CD4-positive, alpha-beta T cell (primary cell): ENCODE measurements at regions of chr2 and their contacts with region 1.

Region 1: DNA sequence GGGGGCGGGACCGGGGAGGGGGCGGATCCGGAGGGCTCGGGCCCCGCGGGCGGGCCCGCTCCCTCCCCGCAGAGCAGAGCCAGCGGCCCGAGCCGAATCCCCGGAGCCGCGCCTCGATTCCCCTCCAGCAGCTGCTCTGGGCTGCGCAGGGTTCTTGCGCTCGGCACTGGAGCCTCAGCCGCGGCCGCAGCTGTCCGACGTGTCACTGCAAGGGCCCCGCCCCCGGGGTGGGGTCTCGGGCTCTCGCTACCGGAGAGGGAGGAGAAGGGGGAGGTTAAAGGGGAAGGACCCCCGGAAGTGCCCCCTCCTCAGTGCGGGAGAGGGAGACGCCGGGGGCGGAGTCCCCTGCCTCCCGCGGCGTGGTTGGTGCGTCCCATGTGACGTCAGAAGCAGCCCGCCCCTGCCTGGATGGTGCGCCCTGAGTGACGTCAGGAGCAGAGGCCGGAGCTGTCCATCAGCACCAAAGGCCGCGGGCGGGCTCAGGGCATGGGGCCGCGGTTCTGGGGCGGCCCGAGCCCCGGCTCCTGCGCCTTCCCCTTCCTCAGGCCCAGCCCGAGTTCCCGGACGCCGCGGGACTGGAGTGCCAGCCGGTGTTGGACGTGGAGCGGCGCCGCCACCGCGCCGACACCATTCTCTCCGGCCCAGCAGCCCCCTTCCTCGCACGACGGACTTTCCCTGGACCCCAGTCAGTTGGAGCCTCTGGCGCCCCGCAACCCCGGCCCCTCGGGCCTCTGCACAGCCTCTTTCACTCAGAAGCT is at the starts of genes CHPF and TMEM198:
- DNase-seq: peak; percentile 83 to 97 (median 90)
- ATAC-seq: peak; percentile 69
- H3K4me3 ChIP-seq: peak within 1 kb of the TSS; percentile 72
- H3K4me3 Mint-ChIP-seq: peak within 1 kb of the TSS; percentile 86
- H3K27ac ChIP-seq: peak within 1 kb of the TSS; percentile 54 to 60
- H3K27ac Mint-ChIP-seq: peak within 1 kb of the TSS; percentile 75
- H3K4me1 ChIP-seq: peaks cover 32% of the 10 kb centered on the region
- H3K4me1 Mint-ChIP-seq: peaks cover 22% of the 10 kb centered on the region
- H3K27me3 ChIP-seq: no peaks in the 10 kb centered on the region
- H3K27me3 Mint-ChIP-seq: peaks cover 7% of the 10 kb centered on the region
- CTCF ChIP-seq: no peak
- total RNA-seq, gene CHPF: 6.5 to 7.1 TPM
- total RNA-seq, gene TMEM198: 0.47 to 0.91 TPM

Region 2: GRCh38 chr2:219155054-219155644 is 388.6 kb before region 1 on chr2:
- CTCF ChIA-PET with region 1: no interaction called
- POLR2A ChIA-PET with region 1: no interaction called
- intact Hi-C with region 1: loop called in 1 of 2 experiments (anchors 10 kb)
- DNase-seq: peak in 5 of 14 experiments; percentile 18 to 84 (median 75)
- ATAC-seq: peak; percentile 21
- H3K4me3 ChIP-seq: no peak overlapping the region
- H3K4me3 Mint-ChIP-seq: no peak overlapping the region
- H3K27ac ChIP-seq: no peak overlapping the region
- H3K27ac Mint-ChIP-seq: no peak overlapping the region
- H3K4me1 ChIP-seq: peaks cover 7% of the 10 kb centered on the region
- H3K4me1 Mint-ChIP-seq: peaks cover 13% of the 10 kb centered on the region
- H3K27me3 ChIP-seq: no peaks in the 10 kb centered on the region
- H3K27me3 Mint-ChIP-seq: no peaks in the 10 kb centered on the region
- CTCF ChIP-seq: peak; percentile 78

Region 3: DNA sequence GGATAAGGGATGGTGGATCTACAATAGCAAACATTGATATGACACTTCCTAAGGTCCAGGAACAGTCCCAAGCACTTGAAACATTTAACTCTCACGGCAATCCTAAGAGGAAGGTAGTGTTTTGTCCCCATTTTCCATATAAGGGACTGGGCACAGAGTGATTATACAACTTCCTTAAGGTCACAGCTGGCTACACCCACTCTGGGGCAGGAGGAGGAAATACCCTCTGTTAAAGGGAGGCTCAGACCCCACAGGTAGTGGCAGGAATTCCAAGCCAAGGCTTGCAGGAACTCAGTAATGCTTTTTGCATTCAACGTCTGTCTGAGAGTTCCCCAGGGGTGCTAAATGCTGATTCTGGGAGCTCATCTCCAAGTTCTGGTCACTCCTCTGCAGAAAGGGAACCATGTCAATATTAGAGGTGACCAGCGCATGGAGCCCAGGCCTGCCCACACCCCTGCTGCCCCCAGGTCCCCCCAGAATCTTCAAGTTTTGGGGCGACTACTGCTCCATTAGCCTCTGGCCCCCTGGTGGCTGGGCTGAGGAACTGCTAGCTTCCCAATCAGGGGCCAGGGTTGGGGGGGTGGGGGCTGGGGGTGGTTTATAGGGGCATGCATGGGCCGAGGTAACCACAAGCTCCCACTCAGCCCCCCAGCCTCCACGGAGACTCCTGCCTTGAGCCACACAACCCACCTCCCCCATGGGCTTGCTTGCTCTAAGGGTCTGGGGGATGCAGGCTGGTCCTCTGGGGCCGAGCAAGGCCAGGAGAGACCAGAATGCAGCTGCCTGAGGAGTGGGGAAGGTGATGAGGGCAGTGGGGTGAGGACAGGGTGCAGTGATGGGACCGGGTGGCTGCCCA is 16.5 kb after region 1 on chr2:
- CTCF ChIA-PET with region 1: interaction called, 21 read pairs
- POLR2A ChIA-PET with region 1: no interaction called
- intact Hi-C with region 1: loop called (anchors 1 to 2 kb)
- DNase-seq: peak in 5 of 14 experiments; percentile 23 to 59 (median 35)
- ATAC-seq: peak; percentile 80
- H3K4me3 ChIP-seq: no peak overlapping the region
- H3K4me3 Mint-ChIP-seq: no peak overlapping the region
- H3K27ac ChIP-seq: no peak overlapping the region
- H3K27ac Mint-ChIP-seq: no peak overlapping the region
- H3K4me1 ChIP-seq: no peaks in the 10 kb centered on the region
- H3K4me1 Mint-ChIP-seq: no peaks in the 10 kb centered on the region
- H3K27me3 ChIP-seq: peaks cover 12 to 14% of the 10 kb centered on the region in 2 experiments
- H3K27me3 Mint-ChIP-seq: peaks cover 52% of the 10 kb centered on the region
- CTCF ChIP-seq: peak; percentile 77

Region 4: DNA sequence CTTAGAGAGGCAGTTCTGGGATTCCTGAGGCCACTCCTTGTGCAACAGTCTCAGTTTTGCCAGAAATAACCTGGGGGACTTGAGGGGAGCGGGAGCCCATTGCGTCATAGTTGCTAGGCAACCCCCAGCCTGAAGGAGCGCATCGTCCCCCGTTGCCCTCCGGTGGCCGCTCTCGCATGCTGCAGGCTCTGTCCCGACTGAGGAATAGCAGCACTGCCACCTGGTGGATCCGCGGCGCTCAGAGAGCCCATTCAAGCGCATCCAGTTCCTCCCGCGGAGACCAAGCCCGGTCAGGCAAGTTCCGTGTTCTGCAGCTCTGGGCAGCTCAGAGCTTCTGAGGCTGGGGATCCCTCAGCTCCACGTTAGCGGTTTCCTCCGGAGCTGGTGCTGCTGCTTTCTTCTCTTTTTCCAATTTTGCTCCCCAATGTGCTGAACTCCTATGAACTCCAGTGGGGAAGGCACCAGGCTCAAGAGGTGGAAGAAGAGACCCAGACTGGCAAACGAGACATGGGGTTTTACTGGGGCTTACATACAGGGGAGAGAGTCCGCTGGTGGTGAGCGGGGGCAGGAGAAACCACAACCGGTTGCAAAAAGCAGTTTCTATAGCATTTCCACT is 98.8 kb after region 1 on chr2:
- CTCF ChIA-PET with region 1: interaction called, 4 read pairs
- POLR2A ChIA-PET with region 1: no interaction called
- intact Hi-C with region 1: loop called (anchors 1 kb)
- DNase-seq: peak; percentile 78 to 95 (median 84)
- ATAC-seq: peak; percentile 100
- H3K4me3 ChIP-seq: no peak overlapping the region
- H3K4me3 Mint-ChIP-seq: no peak overlapping the region
- H3K27ac ChIP-seq: no peak overlapping the region
- H3K27ac Mint-ChIP-seq: no peak overlapping the region
- H3K4me1 ChIP-seq: peaks cover 13% of the 10 kb centered on the region
- H3K4me1 Mint-ChIP-seq: peaks cover 6% of the 10 kb centered on the region
- H3K27me3 ChIP-seq: peaks cover 0 to 7% of the 10 kb centered on the region in 2 experiments
- H3K27me3 Mint-ChIP-seq: peaks cover 39% of the 10 kb centered on the region
- CTCF ChIP-seq: peak; percentile 99

Region 5: DNA sequence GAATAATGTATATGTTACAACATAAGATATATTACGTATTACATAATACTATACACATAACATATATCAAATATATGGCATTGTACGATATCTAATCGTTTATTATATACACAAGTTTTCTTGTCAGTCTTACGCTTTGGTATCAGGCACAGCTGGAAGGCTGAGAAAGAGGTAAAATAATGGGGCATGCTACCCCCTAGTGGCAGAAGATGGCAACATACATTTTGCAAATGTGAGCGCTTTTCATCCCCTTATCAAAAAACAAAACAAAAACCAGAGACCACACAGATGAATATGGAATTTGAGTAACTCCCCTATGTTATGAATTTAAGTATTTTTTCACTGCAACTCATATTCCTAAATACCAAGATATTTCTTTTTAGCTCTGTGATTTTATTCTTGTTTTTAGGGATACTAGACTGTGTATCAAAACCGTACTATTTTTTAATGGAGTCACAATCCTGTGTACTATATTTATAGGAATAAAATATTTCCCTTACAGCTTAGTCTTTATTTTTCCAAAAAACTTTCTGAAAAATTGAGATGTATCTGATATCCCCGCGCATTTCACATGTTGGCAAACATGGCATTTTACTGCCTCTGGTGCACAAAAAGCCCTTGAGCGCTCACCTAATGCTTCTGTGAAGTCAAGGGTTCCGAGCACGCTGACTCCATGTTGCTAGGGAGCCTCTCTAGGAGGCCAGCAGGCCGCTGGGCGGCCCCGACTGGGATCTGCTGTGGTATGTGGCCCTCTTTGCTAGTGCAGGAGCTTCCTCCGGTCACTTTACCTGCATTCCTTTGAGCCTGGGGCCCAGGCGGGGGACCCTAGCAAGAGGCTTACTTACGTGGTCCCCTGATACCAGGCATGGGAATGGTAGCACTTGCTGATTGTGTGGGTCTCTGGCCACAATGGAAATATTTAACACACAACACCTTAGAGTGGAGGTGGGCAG is 146.2 kb after region 1 on chr2:
- CTCF ChIA-PET with region 1: no interaction called
- POLR2A ChIA-PET with region 1: no interaction called
- intact Hi-C with region 1: loop called in 1 of 2 experiments (anchors 2 kb)
- DNase-seq: peak in 8 of 14 experiments; percentile 4 to 64 (median 34)
- ATAC-seq: no peak
- H3K4me3 ChIP-seq: no peak overlapping the region
- H3K4me3 Mint-ChIP-seq: no peak overlapping the region
- H3K27ac ChIP-seq: no peak overlapping the region
- H3K27ac Mint-ChIP-seq: no peak overlapping the region
- H3K4me1 ChIP-seq: peaks cover 3% of the 10 kb centered on the region
- H3K4me1 Mint-ChIP-seq: peaks cover 11% of the 10 kb centered on the region
- H3K27me3 ChIP-seq: peaks cover 7 to 16% of the 10 kb centered on the region in 2 experiments
- H3K27me3 Mint-ChIP-seq: peaks cover 56% of the 10 kb centered on the region
- CTCF ChIP-seq: peak; percentile 74